Endothelial cell of umbilical vein (primary cell): ENCODE measurements at regions of chr2 and their contacts with region 1.

Region 1: DNA sequence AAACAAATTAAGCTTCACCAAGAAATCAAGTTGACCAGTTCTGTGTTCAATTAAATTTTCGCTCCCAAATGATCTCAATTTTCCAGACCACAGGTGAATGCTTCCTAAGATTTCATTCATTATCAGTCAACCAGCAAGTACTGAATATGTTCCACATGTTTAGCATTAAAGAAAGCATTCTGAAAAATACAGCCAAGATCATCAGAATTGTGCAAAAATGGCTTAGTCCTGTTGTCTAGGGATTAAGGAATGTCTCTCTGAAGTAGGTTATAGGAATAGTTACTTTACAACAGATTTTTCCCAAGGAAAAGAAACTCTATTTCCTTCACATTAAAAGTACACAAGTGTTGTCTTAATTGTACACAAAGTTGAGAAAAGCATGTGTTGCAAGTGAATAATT is 69.2 kb downstream of the NRXN1 start:
- DNase-seq: no peak
- H3K4me3 ChIP-seq: no peak overlapping the region
- H3K27ac ChIP-seq: no peak overlapping the region
- H3K4me1 ChIP-seq: no peaks in the 10 kb centered on the region
- H3K27me3 ChIP-seq: no peaks in the 10 kb centered on the region
- CTCF ChIP-seq: no peak
- POLR2A ChIP-seq: no peak

Region 2: GRCh38 chr2:50476174-50476573 is 486.6 kb before region 1 on chr2:
- CTCF ChIA-PET with region 1: no interaction called
- POLR2A ChIA-PET with region 1: no interaction called
- dilution Hi-C with region 1: no loop called
- intact Hi-C with region 1: no loop called
- DNase-seq: no peak
- H3K4me3 ChIP-seq: no peak overlapping the region
- H3K27ac ChIP-seq: no peak overlapping the region
- H3K4me1 ChIP-seq: no peaks in the 10 kb centered on the region
- H3K27me3 ChIP-seq: no peaks in the 10 kb centered on the region
- CTCF ChIP-seq: no peak
- POLR2A ChIP-seq: no peak

Region 3: DNA sequence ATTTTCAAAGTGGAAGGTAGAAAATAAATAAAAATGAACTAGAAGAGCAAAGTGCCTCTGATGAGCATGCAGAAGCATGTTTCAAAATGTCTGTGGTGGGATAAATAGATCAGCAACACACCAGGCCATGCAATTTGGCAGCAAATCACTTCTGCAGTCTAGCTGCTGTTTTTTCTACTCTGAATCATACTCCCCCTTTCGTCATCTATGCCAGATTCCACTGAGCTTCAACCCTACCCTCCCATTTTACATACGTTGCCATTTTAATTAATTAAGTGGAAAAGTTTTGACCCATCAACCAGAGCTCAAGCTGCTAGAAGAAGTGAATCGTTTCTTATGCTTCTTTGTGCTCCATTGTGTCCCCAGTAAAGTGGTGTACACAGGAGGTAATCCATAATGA is 10.1 kb before region 1 on chr2:
- CTCF ChIA-PET with region 1: no interaction called
- POLR2A ChIA-PET with region 1: no interaction called
- dilution Hi-C with region 1: no loop called
- intact Hi-C with region 1: no loop called
- DNase-seq: no peak
- H3K4me3 ChIP-seq: no peak overlapping the region
- H3K27ac ChIP-seq: no peak overlapping the region
- H3K4me1 ChIP-seq: no peaks in the 10 kb centered on the region
- H3K27me3 ChIP-seq: no peaks in the 10 kb centered on the region
- CTCF ChIP-seq: no peak
- POLR2A ChIP-seq: no peak

Region 4: DNA sequence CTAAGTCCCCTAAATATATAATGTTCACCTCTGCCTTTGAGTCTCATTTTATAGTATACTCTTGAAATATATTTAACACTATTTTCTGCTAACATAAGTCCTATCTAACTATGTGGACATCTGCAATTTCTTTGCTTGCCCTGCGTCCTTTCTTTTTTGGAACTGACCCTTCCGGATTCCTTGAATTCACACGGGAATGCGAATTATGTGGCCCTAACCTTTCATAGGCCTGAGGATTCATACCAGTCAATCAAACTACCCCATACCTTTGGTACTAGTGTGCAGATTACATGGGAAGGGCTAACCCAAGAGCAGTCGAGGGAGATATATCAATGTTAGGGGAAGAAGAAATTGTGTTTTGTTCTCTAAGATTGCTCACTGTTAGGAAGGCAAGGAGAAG is 12.8 kb after region 1 on chr2:
- CTCF ChIA-PET with region 1: interaction called, 5 read pairs
- POLR2A ChIA-PET with region 1: no interaction called
- dilution Hi-C with region 1: no loop called
- intact Hi-C with region 1: loop called (anchors 1 kb)
- DNase-seq: no peak
- H3K4me3 ChIP-seq: no peak overlapping the region
- H3K27ac ChIP-seq: no peak overlapping the region
- H3K4me1 ChIP-seq: no peaks in the 10 kb centered on the region
- H3K27me3 ChIP-seq: no peaks in the 10 kb centered on the region
- CTCF ChIP-seq: no peak
- POLR2A ChIP-seq: no peak